ENCODE measurements at regions of chr6 and their contacts with region 1.

Region 1: DNA sequence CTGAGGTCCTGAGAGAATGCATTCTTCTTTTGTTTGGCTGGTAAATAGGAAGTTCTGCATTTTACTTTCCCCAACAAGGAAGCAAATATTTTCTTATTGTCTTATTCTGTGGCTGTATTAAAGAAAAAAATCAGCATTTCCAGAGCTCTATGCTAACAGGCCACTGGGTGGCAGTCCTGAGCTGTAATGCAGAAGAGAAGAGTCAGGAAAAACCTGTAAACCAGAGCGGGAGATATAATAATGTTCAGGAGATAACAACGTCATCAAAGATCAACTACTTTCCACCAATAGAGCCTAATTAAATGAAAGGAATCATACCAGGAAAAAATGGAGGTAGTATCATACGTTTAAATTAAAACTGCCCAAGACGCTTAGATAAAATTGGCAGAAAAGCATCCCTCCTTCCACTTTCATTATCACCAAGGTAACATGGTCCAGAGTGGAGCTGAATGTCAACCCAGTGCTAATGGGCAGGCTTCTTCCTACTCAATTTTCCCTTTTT is 55.6 kb upstream of the CARMIL1 start:
- DNase-seq: peak; percentile 37
- H3K4me3 ChIP-seq: peak overlapping the region; percentile 8
- H3K27ac ChIP-seq: no peak overlapping the region
- H3K27me3 ChIP-seq: no peaks in the 10 kb centered on the region
- CTCF ChIP-seq: peak; percentile 95

Region 2: GRCh38 chr6:25122001-25122400 is 101.5 kb before region 1 on chr6:
- CTCF ChIA-PET with region 1: no interaction called
- POLR2A ChIA-PET with region 1: no interaction called
- DNase-seq: no peak
- H3K4me3 ChIP-seq: no peak overlapping the region
- H3K27ac ChIP-seq: no peak overlapping the region
- H3K27me3 ChIP-seq: no peaks in the 10 kb centered on the region
- CTCF ChIP-seq: no peak

Region 3: GRCh38 chr6:25193460-25194171 is 29.9 kb before region 1 on chr6:
- CTCF ChIA-PET with region 1: interaction called, 10 read pairs
- POLR2A ChIA-PET with region 1: interaction called, 4 read pairs
- DNase-seq: peak; percentile 85
- H3K4me3 ChIP-seq: no peak overlapping the region
- H3K27ac ChIP-seq: peak overlapping the region; percentile 95
- H3K27me3 ChIP-seq: no peaks in the 10 kb centered on the region
- CTCF ChIP-seq: no peak

Region 4: DNA sequence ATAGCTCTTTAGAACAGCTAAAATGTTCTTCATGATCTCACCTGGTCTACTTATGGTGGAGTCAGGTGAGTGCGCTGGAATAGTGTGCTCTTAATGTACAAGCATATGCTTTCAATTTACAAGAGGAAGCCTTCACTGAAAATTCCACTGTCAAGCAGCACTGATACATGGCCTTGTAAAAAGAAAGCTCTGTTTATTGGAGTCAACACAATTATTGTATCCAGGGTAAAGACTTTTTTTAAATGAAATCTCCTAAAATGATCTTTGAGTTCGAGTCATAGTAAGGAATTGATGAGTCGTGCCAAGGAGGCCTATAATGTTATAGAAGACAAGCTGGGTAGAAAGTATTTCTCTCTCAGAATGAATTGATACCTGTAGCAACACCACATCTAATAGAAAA is 14.0 kb after region 1 on chr6:
- CTCF ChIA-PET with region 1: interaction called, 22 read pairs
- POLR2A ChIA-PET with region 1: no interaction called
- DNase-seq: no peak
- H3K4me3 ChIP-seq: no peak overlapping the region
- H3K27ac ChIP-seq: no peak overlapping the region
- H3K27me3 ChIP-seq: no peaks in the 10 kb centered on the region
- CTCF ChIP-seq: no peak

Region 5: GRCh38 chr6:25490018-25490801 is 266.7 kb after region 1 on chr6:
- CTCF ChIA-PET with region 1: interaction called, 57 read pairs
- POLR2A ChIA-PET with region 1: no interaction called
- DNase-seq: peak; percentile 47
- H3K4me3 ChIP-seq: no peak overlapping the region
- H3K27ac ChIP-seq: no peak overlapping the region
- H3K27me3 ChIP-seq: no peaks in the 10 kb centered on the region
- CTCF ChIP-seq: peak; percentile 91

Region 6: DNA sequence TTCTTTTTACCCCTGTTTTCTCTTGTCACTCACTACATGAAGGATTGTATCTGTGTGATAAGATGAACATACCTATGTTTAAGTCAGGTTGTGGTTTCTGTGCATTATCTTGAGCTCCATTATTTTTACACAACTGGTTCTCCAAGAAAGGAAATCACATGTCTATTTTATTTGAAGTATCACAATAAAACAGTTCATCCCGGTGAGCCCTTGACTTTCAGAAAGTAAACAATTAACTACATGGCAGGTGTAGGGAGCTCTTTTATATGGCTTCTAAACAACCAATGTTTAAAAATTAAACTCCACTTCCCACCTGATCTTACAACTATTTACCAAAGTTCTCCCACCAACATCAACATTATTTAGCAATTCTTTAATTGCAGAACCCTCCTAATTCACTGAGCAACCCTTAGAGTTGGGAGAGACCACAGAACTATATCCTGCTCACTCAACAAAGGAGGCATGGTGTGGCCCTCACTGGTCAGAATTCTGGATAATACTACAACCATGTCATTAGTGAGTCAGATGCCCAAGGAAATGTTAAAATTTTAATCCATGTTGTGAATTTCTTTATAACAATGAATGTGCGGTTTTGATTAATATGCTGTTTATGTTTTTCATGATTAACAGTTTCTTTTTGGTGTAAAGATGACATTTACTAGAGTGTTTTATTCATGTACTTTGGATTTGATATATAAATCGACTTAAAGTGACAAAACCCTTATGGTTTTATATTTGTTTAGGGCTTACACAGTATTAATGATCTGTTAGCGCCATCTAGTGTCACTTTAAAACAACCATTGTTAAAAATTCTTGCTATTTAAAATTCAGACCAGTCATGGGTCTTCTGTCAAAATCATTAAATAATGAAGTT is 378.5 kb after region 1 on chr6:
- CTCF ChIA-PET with region 1: interaction called, 10 read pairs
- POLR2A ChIA-PET with region 1: no interaction called
- DNase-seq: peak; percentile 15
- H3K4me3 ChIP-seq: no peak overlapping the region
- H3K27ac ChIP-seq: no peak overlapping the region
- H3K27me3 ChIP-seq: no peaks in the 10 kb centered on the region
- CTCF ChIP-seq: peak; percentile 55

Measured in AG04450 (cell line).